ENCODE measurements at regions of chr19 and their contacts with region 1.

Region 1: DNA sequence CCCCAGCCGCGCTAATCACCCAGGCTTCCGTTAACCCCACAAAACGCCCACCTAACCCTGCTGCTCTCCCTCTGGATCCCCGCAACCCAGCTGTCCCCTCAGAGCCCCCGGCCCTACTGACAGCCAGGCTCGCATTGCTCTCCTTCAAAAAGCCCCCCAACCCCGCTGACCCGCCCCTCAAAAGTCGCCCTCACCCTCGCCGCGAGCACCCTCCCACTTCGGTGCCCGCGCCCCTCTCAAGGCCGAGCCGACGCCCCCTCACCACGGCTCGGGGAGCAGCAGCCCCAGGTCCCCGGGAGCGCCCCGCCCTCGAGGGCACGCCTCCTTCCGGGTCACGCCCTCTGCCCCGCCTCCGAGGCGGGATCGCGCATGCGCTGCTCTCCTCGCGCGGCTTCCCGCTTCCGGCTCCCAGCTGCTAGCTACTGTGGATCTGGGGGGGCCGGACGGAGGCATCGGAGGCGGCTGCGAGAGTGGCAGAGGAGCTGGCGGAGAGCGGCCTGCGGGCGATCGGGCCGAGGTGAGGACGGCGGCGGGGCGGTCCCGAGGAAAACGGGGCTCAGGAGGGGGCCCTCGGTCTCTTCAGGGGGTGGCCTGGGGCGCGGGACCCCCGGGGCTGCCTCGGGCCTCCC is 46.1 kb downstream of the ARHGEF18 start:
- DNase-seq: peak; percentile 88 to 94
- ATAC-seq: peak; percentile 98 to 100 (median 99)
- H3K4me3 ChIP-seq: peak overlapping the region; percentile 96
- H3K27ac ChIP-seq: peak overlapping the region; percentile 85
- H3K4me1 ChIP-seq: peaks cover 30% of the 10 kb centered on the region
- H3K27me3 ChIP-seq: no peaks in the 10 kb centered on the region
- CTCF ChIP-seq: no peak

Region 2: DNA sequence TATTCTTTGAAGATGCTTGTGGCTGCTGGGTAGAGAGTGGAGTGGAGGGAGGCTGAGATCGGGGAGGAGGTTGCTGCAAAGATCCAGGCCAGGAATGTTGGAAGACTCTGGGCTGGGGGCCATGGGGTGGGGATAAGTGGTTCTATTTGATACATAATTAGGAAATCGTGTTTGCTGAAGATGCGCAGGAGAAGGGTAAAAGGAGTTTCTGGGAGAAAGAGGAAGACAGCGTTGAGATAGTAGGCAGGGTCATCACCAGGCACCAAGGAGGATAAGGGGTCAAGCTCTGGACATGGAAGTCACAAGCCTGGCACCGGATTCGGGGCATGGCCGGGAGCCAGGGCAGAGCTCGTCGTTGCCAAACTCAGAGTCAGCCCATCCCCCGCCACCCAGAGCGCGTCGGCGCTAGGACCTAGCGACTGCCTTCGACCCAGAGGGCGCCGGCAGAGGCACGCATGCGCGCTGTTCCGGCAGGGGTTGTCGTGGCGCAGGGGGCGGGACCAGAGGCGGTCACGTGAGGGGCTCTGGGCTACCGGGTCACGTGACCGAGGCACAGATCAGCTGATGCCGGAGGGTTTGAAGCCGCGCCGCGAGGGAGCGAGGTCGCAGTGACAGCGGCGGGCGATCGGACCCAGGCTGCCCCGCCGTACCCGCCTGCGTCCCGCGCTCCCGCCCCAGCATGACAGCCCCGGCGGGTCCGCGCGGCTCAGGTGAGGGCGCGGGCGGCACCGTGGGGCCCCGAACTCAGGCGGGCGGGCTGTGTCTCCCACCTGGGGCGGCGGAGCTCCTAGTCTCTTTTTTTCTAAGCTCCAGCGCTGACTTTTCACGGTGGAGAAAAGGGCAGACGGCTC is 127.5 kb after region 1 on chr19 and contains the start of gene MCOLN1:
- intact Hi-C with region 1: loop called in 1 of 2 experiments (anchors 10 kb)
- DNase-seq: peak; percentile 100
- ATAC-seq: peak; percentile 94 to 97 (median 96)
- H3K4me3 ChIP-seq: peak within 1 kb of the TSS; percentile 88
- H3K27ac ChIP-seq: peak within 1 kb of the TSS; percentile 57
- H3K4me1 ChIP-seq: peaks cover 20% of the 10 kb centered on the region
- H3K27me3 ChIP-seq: no peaks in the 10 kb centered on the region
- CTCF ChIP-seq: no peak
- total RNA-seq, gene MCOLN1: 15.4 to 23.8 (median 17.0) TPM

Region 3: DNA sequence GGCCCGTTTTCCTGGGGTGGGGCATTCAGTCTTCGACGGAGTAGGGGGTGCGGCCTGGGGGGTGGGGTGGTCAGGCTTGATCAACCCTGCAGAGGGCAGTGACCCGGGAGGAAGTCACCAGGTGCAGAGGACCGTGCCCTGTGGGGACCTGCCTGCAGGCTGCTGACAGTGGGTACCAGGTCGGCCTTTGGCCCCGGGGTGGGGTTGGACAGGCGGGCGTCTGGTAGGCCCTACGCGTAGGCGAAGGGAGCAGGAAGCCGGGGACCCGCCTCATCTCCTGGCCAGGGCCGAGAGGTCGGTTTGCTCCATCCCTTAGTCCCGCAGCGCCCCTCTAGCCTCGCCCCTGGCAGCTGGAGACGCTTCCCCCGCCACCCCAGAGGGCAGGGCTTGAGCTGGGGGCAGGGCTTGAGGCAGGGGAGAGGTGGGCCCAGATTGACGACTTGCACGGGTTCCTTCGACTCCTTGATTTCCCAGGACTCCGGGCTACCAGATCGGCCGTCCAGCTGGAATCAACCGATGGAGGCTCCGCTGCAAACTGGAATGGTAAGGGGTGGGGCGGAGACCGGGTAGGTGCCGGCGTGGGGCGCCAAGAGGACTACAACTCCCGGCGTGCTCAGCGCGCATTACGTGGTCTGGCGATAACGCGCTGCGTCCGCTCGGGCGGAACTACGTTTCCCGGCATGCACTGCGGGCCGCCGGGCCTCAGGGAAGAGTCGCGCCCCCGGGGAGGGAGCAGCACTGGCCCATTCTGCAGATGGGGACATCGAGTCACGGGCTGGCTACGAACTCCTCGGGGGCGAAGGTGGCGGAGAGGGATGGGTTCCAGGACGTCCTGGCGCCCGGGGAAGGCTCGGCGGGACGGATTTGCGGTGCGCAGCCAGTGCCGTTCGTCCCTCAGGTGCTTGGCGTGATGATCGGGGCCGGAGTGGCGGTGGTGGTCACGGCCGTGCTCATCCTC is 140.5 kb after region 1 on chr19 and contains the start of gene PNPLA6:
- intact Hi-C with region 1: loop called in 1 of 2 experiments (anchors 10 kb)
- DNase-seq: peak; percentile 97 to 99
- ATAC-seq: peak; percentile 90 to 93 (median 92)
- H3K4me3 ChIP-seq: peak within 1 kb of the TSS; percentile 91
- H3K27ac ChIP-seq: peak within 1 kb of the TSS; percentile 86
- H3K4me1 ChIP-seq: peaks cover 11% of the 10 kb centered on the region
- H3K27me3 ChIP-seq: no peaks in the 10 kb centered on the region
- CTCF ChIP-seq: no peak
- total RNA-seq, gene PNPLA6: 53.3 to 72.8 (median 62.7) TPM